ENCODE measurements at regions of chr17 and their contacts with region 1.

Region 1: DNA sequence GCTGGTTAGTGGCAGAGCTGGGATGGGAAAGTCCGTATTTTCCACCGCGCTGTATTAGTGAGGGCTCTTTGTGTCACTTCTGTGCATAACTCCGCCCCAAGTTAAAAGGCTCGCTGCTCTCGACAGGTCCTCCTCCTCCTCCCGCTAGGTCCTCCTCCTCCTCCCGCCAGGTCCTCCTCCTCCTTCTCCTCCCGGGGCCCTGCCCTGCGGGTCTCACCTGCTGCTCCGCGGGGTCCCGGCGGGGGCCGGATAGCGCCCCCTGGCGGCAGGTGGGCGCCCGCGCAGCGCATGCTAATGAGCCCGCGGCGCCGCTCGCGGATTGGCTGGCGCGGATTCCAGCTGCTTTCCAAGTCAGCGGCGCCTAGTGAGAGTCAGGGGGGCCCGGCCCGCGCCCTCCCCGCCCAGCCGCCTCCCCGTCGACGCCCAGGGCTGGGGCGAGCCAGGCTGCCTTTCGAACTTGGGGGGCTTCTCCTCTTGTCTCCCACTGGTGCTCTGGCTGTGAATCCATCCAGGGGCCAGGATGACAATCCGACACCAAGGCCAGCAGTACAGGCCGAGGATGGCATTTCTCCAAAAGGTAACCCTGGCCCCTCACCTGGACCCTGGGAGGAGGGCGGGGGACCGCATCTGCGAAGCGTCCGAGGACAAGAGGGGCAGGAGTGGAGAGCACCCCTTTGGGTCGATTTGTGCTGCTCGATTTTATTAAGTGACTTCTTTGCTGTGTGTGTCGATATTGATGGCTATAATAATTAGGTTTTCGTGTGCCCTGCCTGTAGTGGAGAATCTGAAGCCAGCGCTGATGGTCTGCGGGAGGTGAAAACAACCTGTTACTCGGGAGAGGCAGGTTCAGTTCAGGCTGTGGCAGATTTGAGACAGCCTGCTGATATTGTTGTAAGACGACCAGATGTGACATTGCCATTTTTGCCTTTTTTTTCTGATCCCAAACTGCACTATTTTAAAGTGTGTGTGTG is at the start of gene RGS9:
- DNase-seq: no peak
- H3K4me3 ChIP-seq: peak within 1 kb of the TSS; percentile 53
- H3K27ac ChIP-seq: no peak within 1 kb of the TSS
- H3K27me3 ChIP-seq: peaks cover 17% of the 10 kb centered on the region
- CTCF ChIP-seq: peak; percentile 79
- polyA plus RNA-seq, gene RGS9: 2.0 and 2.1 TPM in 2 replicates

Region 2: GRCh38 chr17:65055348-65056261 is 81.7 kb before region 1 on chr17:
- CTCF ChIA-PET with region 1: interaction called, 10 read pairs
- POLR2A ChIA-PET with region 1: interaction called, 3 read pairs
- DNase-seq: no peak
- H3K4me3 ChIP-seq: peak overlapping the region; percentile 88
- H3K27ac ChIP-seq: peak overlapping the region; percentile 31
- H3K27me3 ChIP-seq: no peaks in the 10 kb centered on the region
- CTCF ChIP-seq: no peak

Region 3: DNA sequence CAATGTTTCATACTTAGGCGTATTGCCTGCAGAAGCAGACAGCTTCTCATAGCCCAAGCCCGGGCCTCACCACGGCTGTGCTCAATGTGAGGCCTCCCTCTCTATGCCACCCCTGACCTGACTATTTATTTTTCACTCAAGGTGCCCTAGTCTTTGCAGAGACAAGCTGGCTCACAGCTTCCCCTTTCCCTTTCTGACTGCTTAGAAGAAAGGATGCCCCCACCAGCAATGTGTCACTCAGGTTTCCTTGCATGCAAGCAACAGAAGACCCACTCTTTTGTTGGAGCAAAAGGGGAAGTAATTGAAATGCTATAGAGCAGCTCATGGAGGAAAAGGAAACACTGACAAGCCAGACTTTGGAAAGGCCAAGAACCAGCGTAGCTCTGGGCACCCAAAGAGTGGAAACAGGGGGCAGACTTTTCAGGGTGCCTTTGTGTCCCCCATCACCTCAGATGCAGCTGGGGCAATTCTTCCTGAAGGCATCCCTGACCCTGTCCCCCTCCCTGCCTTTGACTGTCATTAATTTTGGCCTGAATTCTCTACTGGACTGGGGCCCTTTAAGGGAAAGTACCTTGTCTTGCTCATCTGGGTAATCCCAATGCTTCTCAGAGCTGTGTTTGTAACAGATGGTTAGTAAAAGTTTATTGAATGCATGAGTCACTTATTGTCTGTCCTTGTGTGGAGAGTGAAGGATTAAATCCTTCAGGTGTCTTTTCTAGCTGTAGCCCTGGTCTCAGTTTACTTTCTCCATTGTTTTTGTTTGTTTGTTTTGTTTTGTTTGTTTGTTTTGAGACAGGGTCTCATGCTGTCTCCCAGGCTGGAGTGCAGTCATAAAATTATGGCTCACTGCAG is 17.7 kb after region 1 on chr17:
- CTCF ChIA-PET with region 1: interaction called, 13 read pairs
- POLR2A ChIA-PET with region 1: no interaction called
- DNase-seq: peak; percentile 29
- H3K4me3 ChIP-seq: no peak overlapping the region
- H3K27ac ChIP-seq: no peak overlapping the region
- H3K27me3 ChIP-seq: peaks cover 3% of the 10 kb centered on the region
- CTCF ChIP-seq: no peak

Region 4: DNA sequence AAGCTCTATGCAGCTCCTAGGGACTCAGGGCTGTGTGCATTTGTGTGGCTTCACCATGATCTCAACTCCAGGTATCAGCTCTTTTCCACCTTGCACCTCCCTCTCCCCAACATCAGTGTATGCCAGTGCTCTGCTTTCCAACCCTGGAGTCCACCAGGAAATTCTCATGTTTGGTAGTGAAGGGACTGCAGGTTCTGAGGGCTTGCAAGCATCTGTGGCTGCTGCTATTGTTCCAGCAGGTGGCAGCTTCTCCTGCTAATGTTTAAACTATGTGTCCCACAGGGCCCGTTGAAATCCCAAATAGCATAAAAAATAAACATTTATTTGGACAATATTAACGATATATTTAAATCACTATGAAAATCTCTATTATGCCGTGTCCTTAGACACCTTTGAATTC is 81.8 kb after region 1 on chr17:
- CTCF ChIA-PET with region 1: no interaction called
- POLR2A ChIA-PET with region 1: no interaction called
- DNase-seq: no peak
- H3K4me3 ChIP-seq: no peak overlapping the region
- H3K27ac ChIP-seq: no peak overlapping the region
- H3K27me3 ChIP-seq: peaks cover 23% of the 10 kb centered on the region
- CTCF ChIP-seq: 0 out of 2 replicates have a peak, but pooled peaks have one; percentile 15

Region 5: DNA sequence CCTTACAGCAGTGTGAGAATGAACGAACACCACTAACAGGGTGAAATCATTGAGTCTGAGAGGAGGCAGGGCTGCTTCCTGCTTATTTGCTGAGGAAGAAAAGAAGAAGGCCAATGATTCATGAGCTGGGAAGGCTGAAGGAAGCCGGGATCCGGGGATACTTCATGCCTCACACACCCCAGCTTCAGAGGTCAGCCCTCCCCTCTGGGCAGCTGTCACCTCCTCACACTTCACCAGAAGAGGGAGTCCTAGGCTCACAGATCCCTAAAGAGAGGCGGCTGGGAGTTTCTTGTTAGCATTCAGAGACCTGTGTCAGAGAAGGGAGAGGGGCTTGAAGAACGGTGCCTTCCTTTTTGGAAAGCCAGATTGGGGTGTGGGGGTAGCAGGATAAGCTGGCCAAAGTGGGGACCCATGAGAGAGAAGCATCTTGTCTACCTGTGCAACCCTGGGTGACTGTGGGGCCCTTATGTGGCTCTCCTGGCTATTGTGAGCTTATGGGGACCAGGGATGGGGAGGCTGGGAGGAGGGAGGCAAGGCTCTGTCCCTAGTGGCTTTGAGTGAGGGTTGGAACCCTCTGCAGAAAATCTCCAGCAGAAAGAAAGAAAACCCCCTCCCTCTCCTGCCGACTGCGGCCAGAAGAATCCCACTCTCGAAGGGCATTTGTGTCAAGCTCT is 94.5 kb after region 1 on chr17:
- CTCF ChIA-PET with region 1: no interaction called
- POLR2A ChIA-PET with region 1: no interaction called
- DNase-seq: peak; percentile 63
- H3K4me3 ChIP-seq: no peak overlapping the region
- H3K27ac ChIP-seq: no peak overlapping the region
- H3K27me3 ChIP-seq: peaks cover 14% of the 10 kb centered on the region
- CTCF ChIP-seq: peak; percentile 80